Panc1 (cell line): ENCODE measurements at regions of chr2 and their contacts with region 1.

Region 1: GRCh38 chr2:47334356-47335136 is 68.4 kb upstream of the MSH2 start:
- DNase-seq: no peak
- ATAC-seq: 0 out of 2 replicates have a peak, but pooled peaks have one; percentile 22
- H3K4me3 ChIP-seq: no peak overlapping the region
- H3K27ac ChIP-seq: no peak overlapping the region
- H3K4me1 ChIP-seq: no peaks in the 10 kb centered on the region
- H3K27me3 ChIP-seq: no peaks in the 10 kb centered on the region
- CTCF ChIP-seq: no peak

Region 2: DNA sequence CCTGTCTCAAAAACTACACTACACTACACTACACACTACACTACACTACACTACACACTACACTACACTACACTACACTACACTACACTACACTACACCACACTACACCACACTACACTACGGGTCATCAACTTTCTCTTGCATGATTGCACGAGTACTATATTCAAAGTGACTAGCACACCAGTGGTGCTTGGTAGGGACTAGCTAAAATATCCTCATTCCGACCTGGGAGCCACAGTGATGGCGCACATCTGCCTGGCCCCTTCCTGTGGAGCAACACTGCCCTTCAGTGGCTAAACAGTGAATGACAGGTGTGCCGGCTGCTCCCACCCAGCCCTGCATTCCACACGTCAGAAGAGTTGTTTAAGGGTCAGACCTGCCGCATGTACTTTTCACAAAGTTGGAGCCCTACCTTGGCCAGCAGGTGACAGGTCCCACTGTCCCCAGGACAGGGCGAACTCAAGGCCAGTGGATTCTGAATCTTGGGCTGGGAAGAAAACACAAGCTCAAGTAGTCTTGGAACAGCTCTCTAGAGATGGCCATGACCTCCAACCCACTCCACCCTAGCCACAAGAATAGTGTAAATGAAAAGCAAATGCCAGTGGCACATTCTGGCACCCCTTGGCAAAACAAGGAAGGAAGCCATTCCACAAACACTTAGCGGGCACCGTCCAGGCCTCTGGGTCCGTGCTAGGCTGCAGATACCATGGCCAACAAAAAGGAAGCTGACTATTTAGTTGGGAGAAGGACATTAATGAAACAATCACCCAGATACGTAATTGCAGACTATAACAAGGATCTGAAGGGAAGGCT is 11.3 kb before region 1 on chr2:
- CTCF ChIA-PET with region 1: interaction called, 11 read pairs
- POLR2A ChIA-PET with region 1: no interaction called
- in situ Hi-C with region 1: no loop called
- intact Hi-C with region 1: no loop called
- DNase-seq: peak; percentile 67
- ATAC-seq: peak; percentile 96
- H3K4me3 ChIP-seq: no peak overlapping the region
- H3K27ac ChIP-seq: no peak overlapping the region
- H3K4me1 ChIP-seq: peaks cover 15% of the 10 kb centered on the region; the same call in 1 of the 2 replicates
- H3K27me3 ChIP-seq: no peaks in the 10 kb centered on the region
- CTCF ChIP-seq: peak; percentile 96